ENCODE measurements at regions of chr1 and their contacts with region 1.

Region 1: DNA sequence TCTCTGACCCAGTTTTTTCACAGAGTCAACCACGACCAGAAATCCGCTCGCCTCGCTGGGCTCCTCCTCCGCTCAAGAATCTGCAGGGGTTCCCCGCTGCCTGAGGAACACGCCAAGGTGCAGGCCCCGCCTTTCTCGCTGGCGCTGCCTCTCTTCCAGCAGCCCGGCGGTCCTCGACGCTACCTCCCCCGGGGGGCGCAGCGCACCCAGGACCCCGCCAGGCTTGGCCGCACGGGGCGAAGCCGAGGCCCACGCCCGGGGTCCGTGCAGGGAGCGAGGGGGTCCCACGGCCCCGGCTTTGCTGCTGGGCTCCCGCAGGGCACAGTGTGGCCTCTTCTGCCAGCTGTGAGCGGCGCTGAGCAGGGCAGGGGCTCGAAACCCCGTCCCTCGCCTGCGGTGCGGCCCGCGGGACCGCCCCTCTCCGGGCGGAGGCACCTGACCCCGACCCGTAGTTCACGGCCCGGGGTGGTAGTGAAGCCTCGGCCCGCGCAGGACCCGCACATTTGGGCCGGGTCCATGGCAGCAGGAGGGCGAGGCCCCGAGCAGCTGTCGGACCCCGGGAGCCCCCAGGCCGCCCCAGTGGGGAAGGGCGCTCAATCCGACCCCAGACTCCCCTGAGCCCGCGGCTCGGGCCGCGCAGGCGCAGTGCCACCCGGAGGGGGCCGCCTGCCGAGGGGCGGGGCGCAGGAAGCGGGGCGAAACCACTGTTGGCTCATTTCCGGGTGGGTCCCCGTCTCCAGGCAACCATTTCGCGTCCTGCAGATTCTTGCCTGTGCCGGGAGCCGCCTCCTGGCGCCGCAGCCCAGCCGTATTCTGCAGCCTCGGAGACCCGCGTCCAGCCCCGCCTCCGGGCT is 10.0 kb upstream of the MMEL1 start:
- DNase-seq: peak; percentile 87
- H3K4me3 Mint-ChIP-seq: peak overlapping the region; percentile 88
- H3K27ac Mint-ChIP-seq: peak overlapping the region; percentile 80
- H3K4me1 Mint-ChIP-seq: peaks cover 6% of the 10 kb centered on the region
- H3K27me3 Mint-ChIP-seq: no peaks in the 10 kb centered on the region
- CTCF ChIP-seq: no peak

Region 2: DNA sequence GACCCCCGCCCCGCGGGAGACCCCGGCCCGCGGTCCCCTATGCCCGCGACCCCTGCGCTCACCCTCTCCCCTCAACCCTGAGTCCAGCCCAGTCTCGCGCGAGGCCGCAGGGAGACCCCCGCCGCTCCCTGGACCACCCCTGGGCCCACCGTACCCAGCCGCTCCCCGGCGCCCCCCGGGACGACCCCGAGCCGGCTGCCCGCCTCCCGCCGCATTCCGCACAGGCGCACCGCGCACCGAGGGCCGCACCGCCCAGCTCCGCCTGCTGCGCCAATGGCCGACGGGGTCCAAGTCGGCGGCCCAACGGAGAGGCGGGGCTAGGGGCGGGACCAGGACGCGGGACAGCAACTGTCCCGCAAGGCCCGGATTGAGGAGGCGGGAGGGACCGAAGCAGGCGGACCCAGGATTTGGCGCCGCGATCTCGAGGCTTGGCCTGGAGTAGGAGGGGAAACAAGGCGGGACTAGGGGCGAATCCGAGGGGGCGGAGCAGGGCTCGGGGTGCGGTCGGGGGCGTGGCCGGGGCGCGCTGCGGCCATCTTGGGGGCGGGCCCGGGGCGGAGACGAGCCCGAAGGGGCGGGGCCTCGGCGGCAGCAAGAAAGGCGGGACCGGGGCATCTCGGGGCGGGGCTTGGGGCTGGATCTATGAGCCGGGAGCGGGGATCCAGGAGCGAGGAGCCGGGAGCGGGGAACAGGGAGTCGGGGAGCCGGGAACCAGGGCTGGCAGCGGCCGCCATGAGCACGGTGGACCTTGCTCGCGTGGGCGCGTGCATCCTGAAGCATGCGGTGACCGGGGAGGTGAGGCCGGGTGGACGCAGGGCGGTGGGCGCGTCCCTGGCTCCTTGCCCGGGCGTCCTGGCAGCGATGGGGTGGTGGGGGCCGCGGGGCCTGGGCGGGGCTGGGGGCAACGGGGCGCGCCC is 56.4 kb before region 1 on chr1 and contains the start of gene PRXL2B:
- CTCF ChIA-PET with region 1: no interaction called
- POLR2A ChIA-PET with region 1: interaction called, 4 read pairs
- intact Hi-C with region 1: loop called (anchors 2 kb)
- DNase-seq: peak; percentile 98
- H3K4me3 Mint-ChIP-seq: peak within 1 kb of the TSS; percentile 87
- H3K27ac Mint-ChIP-seq: peak within 1 kb of the TSS; percentile 89
- H3K4me1 Mint-ChIP-seq: no peaks in the 10 kb centered on the region
- H3K27me3 Mint-ChIP-seq: no peaks in the 10 kb centered on the region
- CTCF ChIP-seq: no peak
- total RNA-seq, gene PRXL2B: 10.3 and 12.6 TPM in 2 replicates